HAP-1 (cell line): ENCODE measurements at regions of chr13 and their contacts with region 1.

Region 1: DNA sequence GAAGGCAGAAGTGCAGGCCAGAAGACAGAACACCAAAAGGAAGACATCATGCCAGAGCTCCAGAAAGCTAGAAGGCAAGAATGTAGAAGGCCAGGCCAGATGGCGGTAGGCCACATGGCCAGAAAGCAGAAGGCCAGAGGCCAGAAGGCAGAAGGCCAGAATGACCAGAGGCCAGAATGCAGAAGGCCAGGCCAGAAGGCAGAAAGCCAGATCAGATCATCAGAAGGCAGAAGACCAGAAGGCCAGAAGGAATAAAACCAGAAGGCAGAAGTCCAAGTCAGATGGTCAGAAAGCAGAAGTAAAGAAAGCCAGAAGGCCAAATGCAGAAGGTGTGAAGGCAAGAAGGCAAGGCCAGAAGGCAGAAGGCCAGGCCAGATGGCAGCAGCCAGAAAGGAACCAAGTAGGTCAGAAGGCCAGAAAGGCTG is 185.0 kb downstream of the TUBA3C start:
- DNase-seq: no peak
- H3K4me3 ChIP-seq: no peak overlapping the region
- H3K4me1 ChIP-seq: no peaks in the 10 kb centered on the region
- H3K27me3 ChIP-seq: no peaks in the 10 kb centered on the region

Region 2: GRCh38 chr13:19071161-19071936 is 74.7 kb after region 1 on chr13:
- in situ Hi-C with region 1: loop called (anchors 10 kb)
- DNase-seq: no peak
- H3K4me3 ChIP-seq: no peak overlapping the region
- H3K4me1 ChIP-seq: no peaks in the 10 kb centered on the region
- H3K27me3 ChIP-seq: no peaks in the 10 kb centered on the region